ENCODE measurements at regions of chr4 and their contacts with region 1.

Region 1: GRCh38 chr4:973431-974397 is at the start of gene DGKQ:
- DNase-seq: peak; percentile 81
- H3K4me3 ChIP-seq: peak within 1 kb of the TSS; percentile 60 to 66
- H3K27ac ChIP-seq: peak within 1 kb of the TSS in 1 of 2 donors; percentile 22
- H3K4me1 ChIP-seq: peaks cover 11% of the 10 kb centered on the region
- H3K27me3 ChIP-seq: no peaks in the 10 kb centered on the region
- CTCF ChIP-seq: no peak
- POLR2A ChIP-seq: no peak
- total RNA-seq, gene DGKQ: 10.4 to 17.1 TPM

Region 2: DNA sequence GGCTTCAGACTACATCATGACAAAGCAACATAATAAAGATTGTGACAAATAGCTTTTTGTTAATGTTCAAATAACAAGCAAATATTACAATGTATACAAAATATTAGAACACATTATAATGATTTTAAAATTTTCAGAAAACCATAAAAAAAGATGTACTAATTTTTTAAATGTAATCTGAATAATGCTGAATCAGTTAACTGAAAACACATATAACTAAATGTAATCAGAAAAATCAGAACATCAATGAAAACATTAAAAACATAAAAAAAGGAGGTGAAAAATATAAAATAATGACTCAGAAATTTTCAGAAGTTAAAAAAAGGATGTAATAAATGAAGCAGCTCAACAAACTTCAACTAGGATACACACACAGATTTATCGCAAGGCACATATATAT is 528.3 kb before region 1 on chr4:
- intact Hi-C with region 1: no loop called
- DNase-seq: no peak
- H3K4me3 ChIP-seq: no peak overlapping the region
- H3K27ac ChIP-seq: no peak overlapping the region
- H3K4me1 ChIP-seq: no peaks in the 10 kb centered on the region
- H3K27me3 ChIP-seq: no peaks in the 10 kb centered on the region
- CTCF ChIP-seq: no peak
- POLR2A ChIP-seq: no peak

Region 3: GRCh38 chr4:931960-932712 is 41.6 kb before region 1 on chr4 and contains the starts of genes GAK and TMEM175:
- intact Hi-C with region 1: loop called (anchors 5 kb)
- DNase-seq: peak; percentile 93
- H3K4me3 ChIP-seq: peak within 1 kb of the TSS; percentile 89 to 97
- H3K27ac ChIP-seq: peak within 1 kb of the TSS; percentile 82 to 83
- H3K4me1 ChIP-seq: peaks cover 14% of the 10 kb centered on the region
- H3K27me3 ChIP-seq: no peaks in the 10 kb centered on the region
- CTCF ChIP-seq: peak in 2 of 4 experiments; percentile 36 to 51
- POLR2A ChIP-seq: peak; percentile 83
- total RNA-seq, gene GAK: 158 to 181 TPM
- total RNA-seq, gene TMEM175: 44.1 to 74.6 TPM

Region 4: GRCh38 chr4:1113311-1114009 is 139.7 kb after region 1 on chr4 and contains the start of gene RNF212:
- intact Hi-C with region 1: no loop called
- DNase-seq: no peak
- H3K4me3 ChIP-seq: peak within 1 kb of the TSS; percentile 30 to 37
- H3K27ac ChIP-seq: no peak within 1 kb of the TSS
- H3K4me1 ChIP-seq: no peaks in the 10 kb centered on the region
- H3K27me3 ChIP-seq: peaks cover 7% of the 10 kb centered on the region
- CTCF ChIP-seq: no peak
- POLR2A ChIP-seq: no peak
- total RNA-seq, gene RNF212: 7.1 to 15.3 TPM